ENCODE measurements at regions of chr7 and their contacts with region 1.

Region 1: GRCh38 chr7:113421696-113422330 is 303.5 kb upstream of the SMIM30 start:
- DNase-seq: peak; percentile 92
- ATAC-seq: peak; percentile 100
- H3K4me3 Mint-ChIP-seq: no peak overlapping the region
- H3K27ac Mint-ChIP-seq: no peak overlapping the region
- H3K4me1 Mint-ChIP-seq: peaks cover 3% of the 10 kb centered on the region
- H3K27me3 Mint-ChIP-seq: no peaks in the 10 kb centered on the region
- CTCF ChIP-seq: peak; percentile 87

Region 2: GRCh38 chr7:111741811-111742240 is 1680.0 kb before region 1 on chr7:
- CTCF ChIA-PET with region 1: no interaction called
- POLR2A ChIA-PET with region 1: no interaction called
- intact Hi-C with region 1: loop called (anchors 10 kb)
- DNase-seq: peak; percentile 50
- ATAC-seq: peak; percentile 91
- H3K4me3 Mint-ChIP-seq: no peak overlapping the region
- H3K27ac Mint-ChIP-seq: no peak overlapping the region
- H3K4me1 Mint-ChIP-seq: no peaks in the 10 kb centered on the region
- H3K27me3 Mint-ChIP-seq: no peaks in the 10 kb centered on the region
- CTCF ChIP-seq: peak; percentile 71

Region 3: DNA sequence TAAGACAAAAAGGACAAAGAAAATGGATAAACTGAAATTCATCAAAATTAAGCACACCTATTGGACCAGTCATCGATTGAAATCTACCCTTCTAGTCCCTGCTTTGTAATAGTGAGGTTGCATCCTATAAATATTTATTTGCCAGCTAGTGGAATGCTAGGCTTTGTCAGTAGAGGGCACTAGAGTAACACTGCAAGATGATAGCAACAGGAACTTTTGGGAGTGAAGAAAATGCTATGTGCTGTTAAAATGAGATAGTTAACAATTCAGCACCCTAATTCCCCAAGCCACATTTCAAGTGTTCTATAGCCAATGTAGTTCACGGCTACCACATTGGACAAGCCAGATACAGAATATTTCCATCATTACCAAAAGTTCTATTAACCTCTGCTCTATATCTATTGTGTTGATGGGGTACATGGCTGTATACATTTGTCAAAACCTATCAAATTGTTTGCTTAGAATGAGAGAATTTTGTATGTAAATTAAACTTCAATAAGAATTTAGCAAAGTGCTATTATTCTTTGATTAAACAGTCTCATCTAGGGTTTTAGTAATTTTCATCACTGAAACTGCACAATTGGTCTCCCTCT is 871.2 kb before region 1 on chr7:
- CTCF ChIA-PET with region 1: interaction called, 20 read pairs
- POLR2A ChIA-PET with region 1: no interaction called
- intact Hi-C with region 1: loop called (anchors 2 kb)
- DNase-seq: peak; percentile 37
- ATAC-seq: peak; percentile 68
- H3K4me3 Mint-ChIP-seq: no peak overlapping the region
- H3K27ac Mint-ChIP-seq: no peak overlapping the region
- H3K4me1 Mint-ChIP-seq: no peaks in the 10 kb centered on the region
- H3K27me3 Mint-ChIP-seq: peaks cover 2% of the 10 kb centered on the region
- CTCF ChIP-seq: peak; percentile 87

Region 4: GRCh38 chr7:113159746-113160339 is 262.0 kb before region 1 on chr7:
- CTCF ChIA-PET with region 1: interaction called, 21 read pairs
- POLR2A ChIA-PET with region 1: no interaction called
- intact Hi-C with region 1: loop called (anchors 5 kb)
- DNase-seq: peak; percentile 13
- ATAC-seq: peak; percentile 51
- H3K4me3 Mint-ChIP-seq: no peak overlapping the region
- H3K27ac Mint-ChIP-seq: no peak overlapping the region
- H3K4me1 Mint-ChIP-seq: no peaks in the 10 kb centered on the region
- H3K27me3 Mint-ChIP-seq: peaks cover 8% of the 10 kb centered on the region
- CTCF ChIP-seq: peak; percentile 59

Measured in activated CD8-positive, alpha-beta T cell treated with anti-CD3 and anti-CD28 coated beads for 36 hours (primary cell).